Calu3 (cell line): ENCODE measurements at regions of chr3 and their contacts with region 1.

Region 1: DNA sequence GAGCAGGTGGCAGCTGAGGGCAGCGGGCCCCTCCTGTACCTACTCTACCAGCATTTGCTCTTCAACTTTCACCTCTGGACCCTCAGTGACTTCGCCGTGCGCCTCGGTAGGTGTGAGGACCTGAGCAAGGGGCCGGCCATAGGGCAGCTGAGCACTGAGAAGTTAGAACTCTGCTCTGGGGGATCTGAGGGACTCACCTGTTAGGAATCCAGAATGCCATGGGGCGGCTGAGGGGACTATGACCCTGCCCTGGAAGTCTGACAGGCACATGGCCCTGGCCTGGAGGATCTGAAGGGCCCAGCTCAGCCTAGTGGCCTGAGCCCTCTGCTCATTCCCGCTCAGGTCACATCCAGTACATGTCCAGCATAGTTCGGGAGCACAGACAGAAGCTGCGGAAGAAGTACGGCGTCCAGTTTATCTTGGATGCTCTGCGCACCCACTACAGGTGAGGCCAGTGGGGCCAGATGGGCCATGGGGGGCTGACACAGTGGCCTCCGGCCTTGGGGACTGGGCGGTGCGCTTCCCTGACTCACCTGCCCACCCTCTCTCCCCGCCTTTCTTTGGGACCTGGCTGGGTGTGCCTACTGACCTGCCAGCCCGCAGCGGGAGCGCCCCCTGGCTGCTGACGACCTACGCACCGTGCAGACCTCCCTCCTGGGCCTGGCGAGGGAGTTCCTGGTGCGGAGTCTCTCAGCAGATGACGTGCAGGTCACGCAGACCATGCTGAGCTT is 18.8 kb downstream of the NBEAL2 start:
- DNase-seq: peak; percentile 84
- H3K4me3 Mint-ChIP-seq: no peak overlapping the region
- H3K27ac Mint-ChIP-seq: no peak overlapping the region
- H3K4me1 Mint-ChIP-seq: no peaks in the 10 kb centered on the region
- H3K27me3 Mint-ChIP-seq: no peaks in the 10 kb centered on the region
- CTCF ChIP-seq: peak; percentile 69

Region 2: GRCh38 chr3:46585799-46586693 is 412.2 kb before region 1 on chr3:
- CTCF ChIA-PET with region 1: no interaction called
- intact Hi-C with region 1: no loop called
- DNase-seq: no peak
- H3K4me3 Mint-ChIP-seq: peak overlapping the region; percentile 31
- H3K27ac Mint-ChIP-seq: peak overlapping the region; percentile 92
- H3K4me1 Mint-ChIP-seq: peaks cover 36% of the 10 kb centered on the region
- H3K27me3 Mint-ChIP-seq: no peaks in the 10 kb centered on the region
- CTCF ChIP-seq: no peak

Region 3: DNA sequence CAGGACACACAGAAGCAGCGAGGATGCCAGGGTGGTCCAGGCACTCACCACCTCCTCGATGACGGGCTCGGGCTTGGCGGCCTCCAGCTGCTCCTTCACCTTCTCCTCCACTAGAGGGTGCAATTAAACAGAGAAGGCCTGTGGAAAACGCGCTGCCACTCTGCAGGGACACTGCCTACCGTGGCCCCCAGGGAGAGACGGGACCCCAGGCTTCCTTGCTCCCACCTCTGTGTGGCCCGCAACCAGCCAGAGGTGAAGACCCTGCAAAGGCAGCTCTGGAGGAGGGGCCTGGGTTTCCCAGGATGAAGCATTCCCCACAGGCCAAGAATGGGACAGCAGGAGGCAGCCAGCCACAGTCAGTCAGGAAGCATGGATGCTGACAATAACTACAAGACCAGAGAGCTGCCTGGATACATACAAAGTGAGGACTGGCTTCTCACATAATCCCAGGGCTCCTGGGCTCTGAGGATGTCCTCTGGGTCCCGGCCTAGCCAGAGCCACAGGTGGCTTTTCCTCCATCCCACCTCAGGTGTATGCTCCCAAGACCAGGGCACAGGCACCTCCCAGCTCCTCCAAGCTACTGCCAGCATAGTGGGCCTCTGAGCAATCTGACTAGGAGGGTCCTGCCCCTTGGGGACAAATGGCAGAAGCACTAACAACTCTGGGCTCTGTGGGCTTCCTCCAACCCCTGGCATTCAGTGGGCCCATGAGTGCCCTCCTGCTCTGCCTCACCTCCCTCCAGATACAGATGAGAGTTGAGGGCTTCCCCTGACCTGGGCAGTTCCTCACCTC is 74.5 kb before region 1 on chr3:
- CTCF ChIA-PET with region 1: no interaction called
- intact Hi-C with region 1: loop called (anchors 5 kb)
- DNase-seq: peak; percentile 38
- H3K4me3 Mint-ChIP-seq: no peak overlapping the region
- H3K27ac Mint-ChIP-seq: no peak overlapping the region
- H3K4me1 Mint-ChIP-seq: peaks cover 4% of the 10 kb centered on the region
- H3K27me3 Mint-ChIP-seq: no peaks in the 10 kb centered on the region
- CTCF ChIP-seq: peak; percentile 65